ENCODE measurements at regions of chr2 and their contacts with region 1.

Region 1: GRCh38 chr2:160977376-160977775 is 182.9 kb upstream of the TANK start:
- DNase-seq: no peak
- ATAC-seq: no peak
- H3K4me3 Mint-ChIP-seq: no peak overlapping the region
- H3K27ac Mint-ChIP-seq: no peak overlapping the region
- H3K4me1 Mint-ChIP-seq: peaks cover 2% of the 10 kb centered on the region
- H3K27me3 Mint-ChIP-seq: no peaks in the 10 kb centered on the region

Region 2: DNA sequence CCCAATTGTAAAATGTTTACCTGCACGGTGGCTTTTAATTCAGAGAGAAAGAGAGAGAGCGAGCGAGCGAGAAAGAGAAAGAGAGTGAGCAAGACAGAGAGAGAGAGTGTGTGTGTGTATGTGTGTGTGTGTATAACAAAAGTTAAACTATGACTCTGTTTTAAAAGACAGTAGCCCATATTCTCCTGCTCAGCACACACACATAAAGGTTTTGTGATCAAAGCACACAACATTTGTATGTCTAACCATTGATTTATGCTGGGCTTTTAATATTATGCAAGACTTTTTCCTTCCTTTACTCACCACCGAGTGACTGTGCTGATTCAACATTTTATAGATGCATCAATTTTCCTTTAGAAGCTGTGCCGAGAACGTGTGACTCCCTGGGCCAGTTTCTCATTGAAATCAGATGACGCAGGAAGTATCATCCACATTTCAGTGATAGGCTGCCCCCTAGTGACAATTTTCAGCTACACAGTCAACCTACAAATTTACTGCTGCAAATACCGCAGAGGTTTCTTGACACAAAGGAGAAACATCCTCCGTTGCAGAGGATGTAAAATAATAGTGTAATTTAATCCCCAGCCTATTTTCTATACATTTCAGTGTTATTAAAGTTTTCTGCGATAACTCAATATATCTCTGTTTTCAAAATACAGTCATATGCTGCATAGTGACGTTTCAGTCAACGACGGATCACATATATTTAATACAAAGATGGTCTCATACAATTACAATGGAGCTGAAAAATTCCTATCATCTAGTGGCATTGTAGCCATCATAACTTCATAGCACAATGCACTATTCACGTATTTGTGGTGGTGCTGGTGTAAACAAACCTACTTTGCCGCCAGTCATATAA is 17.0 kb after region 1 on chr2:
- CTCF ChIA-PET with region 1: interaction called, 11 read pairs
- POLR2A ChIA-PET with region 1: no interaction called
- intact Hi-C with region 1: no loop called
- DNase-seq: peak; percentile 79
- ATAC-seq: peak; percentile 94
- H3K4me3 Mint-ChIP-seq: no peak overlapping the region
- H3K27ac Mint-ChIP-seq: no peak overlapping the region
- H3K4me1 Mint-ChIP-seq: peaks cover 10% of the 10 kb centered on the region
- H3K27me3 Mint-ChIP-seq: no peaks in the 10 kb centered on the region